ENCODE measurements at regions of chr20 and their contacts with region 1.

Region 1: GRCh38 chr20:53547664-53548239 is 45.9 kb downstream of the ZNF217 start:
- DNase-seq: peak; percentile 18
- H3K4me3 ChIP-seq: no peak overlapping the region
- H3K27me3 ChIP-seq: no peaks in the 10 kb centered on the region
- CTCF ChIP-seq: peak; percentile 82

Region 2: DNA sequence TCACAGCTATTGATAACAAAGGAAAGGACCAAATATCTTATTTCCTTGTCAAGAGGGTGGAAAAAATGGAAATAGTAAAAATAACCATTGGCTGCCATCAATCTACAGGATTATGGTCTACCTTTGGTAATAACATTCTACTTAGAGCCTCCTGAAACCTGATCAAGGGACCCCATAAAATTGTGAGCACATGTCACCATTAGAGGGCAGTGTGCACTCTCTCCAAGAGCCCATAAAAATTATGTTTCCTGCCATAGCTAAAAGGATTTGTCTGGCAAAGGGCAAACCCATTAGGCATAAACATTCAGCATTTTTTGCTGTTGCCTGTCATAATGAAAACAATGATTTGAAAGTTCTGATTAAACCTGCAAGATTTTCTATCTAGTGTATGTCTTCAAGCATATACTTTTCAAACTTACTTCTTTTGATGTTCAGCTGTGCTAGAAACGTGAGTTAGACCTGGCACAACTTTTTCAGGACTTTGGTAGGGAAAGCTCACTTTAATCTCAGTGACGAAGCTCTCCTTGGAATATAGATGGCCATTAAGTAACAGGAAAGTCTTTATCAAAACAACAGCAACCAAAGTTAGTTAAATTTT is 1235.5 kb before region 1 on chr20:
- CTCF ChIA-PET with region 1: interaction called, 26 read pairs
- POLR2A ChIA-PET with region 1: no interaction called
- DNase-seq: no peak
- H3K4me3 ChIP-seq: no peak overlapping the region
- H3K27me3 ChIP-seq: no peaks in the 10 kb centered on the region
- CTCF ChIP-seq: peak; percentile 73

Region 3: DNA sequence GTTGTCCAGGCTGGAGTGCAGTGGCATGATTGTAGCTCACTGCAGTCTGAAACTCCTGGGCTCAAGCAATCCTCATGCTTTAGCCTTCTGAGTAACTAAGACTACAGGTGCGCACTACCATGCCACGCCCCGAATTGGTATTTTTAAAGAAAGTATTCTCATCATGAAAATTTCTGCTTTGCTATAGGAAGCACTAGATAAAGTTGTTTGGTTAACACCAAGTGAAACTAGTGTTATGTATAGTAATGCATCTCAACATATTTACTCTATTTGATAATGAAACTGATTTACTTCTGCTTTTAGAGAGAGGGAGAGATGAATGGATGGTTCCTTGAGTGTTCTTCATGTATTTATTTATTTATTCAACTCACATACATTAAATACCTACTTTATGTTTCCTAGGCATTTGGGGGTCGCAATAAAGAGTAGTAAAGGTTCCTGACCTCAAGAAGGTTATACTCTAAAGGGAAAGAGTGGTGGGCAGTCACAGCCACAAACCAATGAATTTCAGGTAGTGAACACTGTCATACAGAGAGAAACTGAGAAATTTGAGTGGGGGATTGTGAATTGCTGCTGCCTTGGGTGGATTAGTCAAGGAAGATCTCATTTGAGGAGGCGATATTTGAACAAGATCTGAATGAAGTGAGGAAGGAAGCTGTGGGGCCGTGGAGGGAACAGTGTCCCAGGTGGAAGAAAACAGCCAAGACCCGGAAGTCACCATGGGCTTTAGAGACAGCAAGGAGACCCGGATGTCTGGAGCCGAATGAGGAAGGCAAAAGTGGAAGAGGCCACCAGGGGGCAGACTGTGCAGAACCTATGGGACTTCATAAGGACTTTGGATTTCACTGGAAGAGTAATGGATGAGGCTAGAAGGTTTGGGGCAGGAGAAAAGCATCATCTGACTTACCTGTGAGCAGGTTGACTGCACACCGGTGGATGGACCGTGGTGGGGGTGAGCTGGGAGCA is 390.0 kb before region 1 on chr20:
- CTCF ChIA-PET with region 1: interaction called, 12 read pairs
- POLR2A ChIA-PET with region 1: no interaction called
- DNase-seq: no peak
- H3K4me3 ChIP-seq: no peak overlapping the region
- H3K27me3 ChIP-seq: no peaks in the 10 kb centered on the region
- CTCF ChIP-seq: peak; percentile 70

Region 4: DNA sequence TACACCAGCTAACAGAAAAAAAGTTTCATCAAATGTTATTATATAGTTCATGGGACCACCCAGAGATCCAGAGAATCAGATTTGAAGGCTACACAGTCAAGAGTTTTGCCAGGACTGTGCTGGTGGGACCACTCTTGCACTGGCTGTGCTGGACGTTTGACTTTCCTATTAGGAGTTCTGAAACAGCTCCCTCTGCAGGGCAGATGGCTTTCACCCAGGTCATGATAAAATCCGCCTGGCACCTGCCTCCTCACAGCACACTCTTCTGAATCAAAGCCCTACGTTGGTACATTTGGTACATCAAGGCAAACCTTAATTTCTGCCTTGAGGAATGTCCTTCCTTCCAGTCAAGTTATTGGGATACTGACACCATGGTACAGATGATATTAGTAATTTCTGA is 256.2 kb before region 1 on chr20:
- CTCF ChIA-PET with region 1: no interaction called
- POLR2A ChIA-PET with region 1: no interaction called
- DNase-seq: no peak
- H3K4me3 ChIP-seq: no peak overlapping the region
- H3K27me3 ChIP-seq: no peaks in the 10 kb centered on the region
- CTCF ChIP-seq: no peak

Region 5: GRCh38 chr20:53939572-53940359 is 392.0 kb after region 1 on chr20:
- CTCF ChIA-PET with region 1: interaction called, 10 read pairs
- POLR2A ChIA-PET with region 1: no interaction called
- DNase-seq: peak; percentile 80
- H3K4me3 ChIP-seq: no peak overlapping the region
- H3K27me3 ChIP-seq: no peaks in the 10 kb centered on the region
- CTCF ChIP-seq: peak; percentile 74

Measured in BJ (cell line).